ENCODE measurements at regions of chr4 and their contacts with region 1.

Region 1: GRCh38 chr4:11720292-11720691 is 291.6 kb upstream of the HS3ST1 start:
- DNase-seq: no peak
- ATAC-seq: no peak
- H3K4me3 ChIP-seq: no peak overlapping the region
- H3K27ac ChIP-seq: no peak overlapping the region
- H3K4me1 ChIP-seq: no peaks in the 10 kb centered on the region
- H3K27me3 ChIP-seq: no peaks in the 10 kb centered on the region
- CTCF ChIP-seq: peak in 2 of 5 experiments; percentile 31 to 42
- POLR2A ChIP-seq: no peak

Region 2: DNA sequence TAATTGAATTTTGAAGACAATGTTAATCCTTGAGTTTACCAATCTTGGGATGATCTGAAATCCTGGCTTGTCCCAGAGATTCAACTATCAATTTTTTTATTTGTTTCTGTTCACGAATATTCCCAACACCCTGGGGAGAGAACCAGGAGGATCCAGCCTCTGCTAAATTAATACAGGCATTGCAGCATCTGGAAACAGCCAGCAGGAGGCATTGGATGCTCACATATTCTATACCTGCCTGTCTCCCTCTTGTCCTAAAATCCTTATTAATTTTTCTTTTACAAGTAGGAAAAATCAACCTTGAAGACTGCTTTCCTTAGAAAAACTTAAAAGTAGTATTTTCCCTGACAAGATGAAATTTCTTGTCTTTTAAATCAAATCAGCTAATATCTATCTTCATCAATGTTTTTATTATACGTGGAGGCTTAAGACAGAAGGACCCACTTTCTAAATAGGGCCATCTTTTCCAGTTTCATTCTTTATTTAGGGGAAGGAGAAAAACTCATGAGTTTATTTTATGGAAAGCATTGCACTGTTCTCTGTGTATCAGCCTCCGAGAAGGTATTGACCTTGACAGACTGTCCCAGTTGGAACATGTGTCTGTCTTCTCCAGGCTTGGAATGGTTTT is 1138.1 kb before region 1 on chr4:
- in situ Hi-C with region 1: loop called in 1 of 4 experiments (anchors 25 kb)
- intact Hi-C with region 1: no loop called
- DNase-seq: no peak
- ATAC-seq: no peak
- H3K4me3 ChIP-seq: no peak overlapping the region
- H3K27ac ChIP-seq: no peak overlapping the region
- H3K4me1 ChIP-seq: no peaks in the 10 kb centered on the region
- H3K27me3 ChIP-seq: no peaks in the 10 kb centered on the region
- CTCF ChIP-seq: peak in 2 of 5 experiments; percentile 44
- POLR2A ChIP-seq: no peak

Region 3: DNA sequence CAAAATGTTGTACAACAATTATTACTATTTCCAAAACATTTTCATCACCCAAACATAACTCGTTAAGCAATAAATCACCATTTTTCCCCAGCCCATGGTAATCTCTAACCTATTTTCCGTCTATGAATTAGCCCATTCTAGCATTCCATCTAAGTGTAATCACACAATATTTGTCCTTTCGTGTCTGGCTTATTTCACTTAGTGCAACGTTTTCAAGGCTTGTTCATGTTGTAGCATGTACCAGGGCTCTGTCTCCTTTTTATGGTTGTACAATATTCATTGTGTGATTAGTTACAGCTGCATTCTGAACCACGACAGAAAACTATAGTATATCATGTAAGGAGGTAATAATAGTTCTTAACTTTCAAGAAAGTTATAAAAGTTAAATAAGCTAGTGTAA is 364.4 kb after region 1 on chr4:
- in situ Hi-C with region 1: no loop called
- intact Hi-C with region 1: no loop called
- DNase-seq: no peak
- ATAC-seq: no peak
- H3K4me3 ChIP-seq: no peak overlapping the region
- H3K27ac ChIP-seq: no peak overlapping the region
- H3K4me1 ChIP-seq: no peaks in the 10 kb centered on the region
- H3K27me3 ChIP-seq: no peaks in the 10 kb centered on the region
- CTCF ChIP-seq: no peak
- POLR2A ChIP-seq: no peak

Measured in gastrocnemius medialis (tissue), 4 donors.